ENCODE measurements at regions of chr5 and their contacts with region 1.

Region 1: DNA sequence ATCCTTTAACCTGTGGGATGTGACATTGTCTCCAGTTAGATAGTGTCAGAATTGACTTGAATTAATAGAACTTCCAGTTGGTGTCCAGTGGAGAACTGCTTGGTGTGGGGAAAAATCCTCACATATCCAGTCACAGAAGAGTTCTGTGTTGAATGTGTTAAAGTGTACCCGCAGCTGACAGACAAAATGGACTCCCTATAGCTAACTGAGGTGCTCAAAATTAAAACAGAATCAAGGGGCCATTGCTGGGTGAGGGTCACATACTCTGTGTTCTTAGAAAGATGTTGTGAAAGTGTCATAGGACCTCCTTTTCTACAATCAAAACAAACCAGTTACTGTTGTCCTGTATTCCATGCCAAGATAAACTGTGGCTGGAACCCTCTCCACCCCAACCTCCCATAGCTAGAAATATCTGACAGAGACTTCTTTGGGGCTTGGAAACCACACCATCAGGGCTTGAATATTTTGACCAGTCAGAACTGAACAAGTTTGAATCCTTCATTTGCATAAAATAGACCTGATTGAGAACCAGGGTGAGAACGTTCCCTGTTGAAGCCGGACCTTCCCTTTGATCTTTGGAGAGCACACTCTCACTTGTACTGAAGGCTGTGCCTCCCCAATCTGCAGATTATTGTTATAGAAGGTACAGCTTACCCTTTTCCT is 164.0 kb upstream of the ZNF608 start:
- DNase-seq: no peak

Region 2: GRCh38 chr5:124859027-124859426 is 51.5 kb before region 1 on chr5:
- intact Hi-C with region 1: loop called in 1 of 2 experiments (anchors 2 kb)
- DNase-seq: no peak